ENCODE measurements at regions of chr3 and their contacts with region 1.

Region 1: GRCh38 chr3:80696281-80696680 is 928.5 kb upstream of the ROBO1 start:
- DNase-seq: peak in 3 of 5 donors; percentile 13 to 84 (median 82)
- H3K4me3 ChIP-seq: no peak overlapping the region
- H3K27ac ChIP-seq: no peak overlapping the region
- H3K4me1 ChIP-seq: no peaks in the 10 kb centered on the region
- H3K27me3 ChIP-seq: no peaks in the 10 kb centered on the region
- CTCF ChIP-seq: no peak

Region 2: GRCh38 chr3:79521238-79521848 is 1174.9 kb before region 1 on chr3:
- intact Hi-C with region 1: loop called (anchors 10 kb)
- DNase-seq: peak in 2 of 5 donors; percentile 65 to 72
- H3K4me3 ChIP-seq: no peak overlapping the region
- H3K27ac ChIP-seq: no peak overlapping the region
- H3K4me1 ChIP-seq: no peaks in the 10 kb centered on the region
- H3K27me3 ChIP-seq: no peaks in the 10 kb centered on the region
- CTCF ChIP-seq: peak; percentile 48

Region 3: DNA sequence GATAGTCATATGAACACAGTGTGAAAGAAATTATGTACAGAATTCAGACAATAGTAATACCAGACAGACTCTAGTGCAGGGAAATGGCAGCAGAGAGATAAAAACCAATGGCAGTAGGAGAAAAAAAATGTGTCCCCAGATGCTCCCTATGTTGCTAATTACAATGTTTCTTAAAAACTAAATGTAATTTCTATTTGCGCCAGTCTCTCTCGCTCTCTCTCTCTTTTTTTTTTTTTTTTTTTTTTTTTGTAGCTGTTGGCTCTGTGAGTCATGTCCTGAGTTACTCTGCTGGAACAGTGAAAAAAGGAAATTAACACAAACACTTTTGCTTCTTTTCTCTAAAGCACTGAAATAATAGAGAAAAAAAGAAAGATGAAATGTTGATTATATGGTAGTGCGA is 193.3 kb after region 1 on chr3:
- intact Hi-C with region 1: no loop called
- DNase-seq: no peak
- H3K4me3 ChIP-seq: no peak overlapping the region
- H3K27ac ChIP-seq: no peak overlapping the region
- H3K4me1 ChIP-seq: no peaks in the 10 kb centered on the region
- H3K27me3 ChIP-seq: no peaks in the 10 kb centered on the region
- CTCF ChIP-seq: no peak

Measured in kidney (tissue), 22 donors.